G401 (cell line): ENCODE measurements at regions of chr2 and their contacts with region 1.

Region 1: DNA sequence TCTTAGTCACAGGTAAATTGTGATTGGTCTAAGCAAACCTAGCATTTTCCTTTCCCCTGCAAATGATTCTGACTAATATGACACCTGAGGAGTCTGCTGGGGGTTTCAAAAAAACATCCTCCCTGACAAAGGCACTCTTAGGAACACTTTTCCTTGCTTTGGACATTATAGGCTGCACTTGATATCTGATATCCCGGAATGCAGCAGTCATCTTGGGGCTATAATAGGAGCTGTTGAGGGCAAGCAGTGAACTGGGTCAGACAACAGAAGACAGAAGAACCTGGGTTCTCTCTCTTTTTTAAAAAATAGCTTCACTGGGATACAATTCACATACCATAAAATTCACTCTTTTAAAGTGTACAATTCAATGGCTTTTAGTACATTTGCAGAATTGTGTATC is 229.3 kb downstream of the RAB3GAP1 start:
- DNase-seq: no peak

Region 2: DNA sequence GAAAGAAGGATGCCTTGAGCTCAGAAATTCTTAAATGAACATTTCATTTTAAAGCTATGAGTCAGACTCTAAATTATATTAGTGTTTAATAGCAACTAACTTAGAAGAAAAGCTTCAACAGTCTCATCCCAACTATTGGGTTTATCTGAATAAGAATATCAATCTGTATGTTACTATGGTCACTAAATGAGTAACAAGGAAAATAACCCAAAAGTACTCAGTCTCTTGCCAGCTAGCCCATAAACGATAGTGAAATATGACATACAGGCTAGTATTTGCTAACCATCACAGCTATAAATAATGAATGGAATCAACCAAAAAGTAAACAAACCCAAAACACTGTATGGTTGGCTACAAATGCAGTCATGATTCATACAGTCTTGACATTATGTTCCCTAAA is 54.4 kb before region 1 on chr2:
- in situ Hi-C with region 1: loop called (anchors 10 kb)
- DNase-seq: no peak

Region 3: GRCh38 chr2:135607561-135607960 is 326.2 kb after region 1 on chr2:
- in situ Hi-C with region 1: no loop called
- DNase-seq: no peak